ENCODE measurements at regions of chr4 and their contacts with region 1.

Region 1: DNA sequence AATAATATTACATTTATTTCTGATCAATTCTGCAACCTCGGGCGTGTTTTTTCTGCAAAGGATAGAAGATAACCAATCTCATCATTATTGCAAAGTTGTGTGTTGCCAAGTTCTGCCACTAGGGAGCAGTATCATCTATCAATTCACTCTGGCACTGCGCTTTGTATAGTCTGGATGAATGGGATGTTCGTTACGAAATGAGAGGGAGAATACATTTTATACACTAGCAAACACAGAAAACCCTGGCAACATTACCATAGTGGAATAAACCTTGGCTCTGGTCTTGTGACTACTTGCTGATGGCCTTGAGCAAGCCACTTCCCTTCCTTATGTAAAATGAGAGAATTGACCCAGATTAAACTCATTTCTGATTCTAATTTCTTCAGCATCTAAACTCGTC is 97.5 kb upstream of the ZNF518B start:
- DNase-seq: peak; percentile 46
- H3K4me3 ChIP-seq: no peak overlapping the region
- H3K27ac ChIP-seq: no peak overlapping the region
- H3K4me1 ChIP-seq: peaks cover 0 to 5% (median 0%) of the 10 kb centered on the region in 4 donors
- H3K27me3 ChIP-seq: peaks cover 12% of the 10 kb centered on the region
- CTCF ChIP-seq: peak; percentile 69 to 76 (median 73)
- EP300 ChIP-seq: no peak
- POLR2A ChIP-seq: no peak

Region 2: GRCh38 chr4:10157478-10158332 is 397.0 kb before region 1 on chr4:
- in situ Hi-C with region 1: loop called (anchors 10 kb)
- intact Hi-C with region 1: loop called (anchors 10 kb)
- DNase-seq: peak; percentile 54
- H3K4me3 ChIP-seq: no peak overlapping the region
- H3K27ac ChIP-seq: peak overlapping the region in 3 of 4 donors; percentile 24 to 53 (median 48)
- H3K4me1 ChIP-seq: peaks cover 0 to 19% (median 8%) of the 10 kb centered on the region in 4 donors
- H3K27me3 ChIP-seq: no peaks in the 10 kb centered on the region
- CTCF ChIP-seq: peak; percentile 71 to 85 (median 82)
- EP300 ChIP-seq: no peak
- POLR2A ChIP-seq: no peak

Region 3: GRCh38 chr4:10164877-10165283 is 389.8 kb before region 1 on chr4:
- in situ Hi-C with region 1: loop called in 3 of 4 experiments (anchors 10 kb)
- intact Hi-C with region 1: loop called (anchors 10 kb)
- DNase-seq: peak; percentile 55
- H3K4me3 ChIP-seq: no peak overlapping the region
- H3K27ac ChIP-seq: no peak overlapping the region
- H3K4me1 ChIP-seq: peaks cover 0 to 20% (median 7%) of the 10 kb centered on the region in 4 donors
- H3K27me3 ChIP-seq: no peaks in the 10 kb centered on the region
- CTCF ChIP-seq: peak; percentile 57 to 69 (median 64)
- EP300 ChIP-seq: no peak
- POLR2A ChIP-seq: no peak

Region 4: DNA sequence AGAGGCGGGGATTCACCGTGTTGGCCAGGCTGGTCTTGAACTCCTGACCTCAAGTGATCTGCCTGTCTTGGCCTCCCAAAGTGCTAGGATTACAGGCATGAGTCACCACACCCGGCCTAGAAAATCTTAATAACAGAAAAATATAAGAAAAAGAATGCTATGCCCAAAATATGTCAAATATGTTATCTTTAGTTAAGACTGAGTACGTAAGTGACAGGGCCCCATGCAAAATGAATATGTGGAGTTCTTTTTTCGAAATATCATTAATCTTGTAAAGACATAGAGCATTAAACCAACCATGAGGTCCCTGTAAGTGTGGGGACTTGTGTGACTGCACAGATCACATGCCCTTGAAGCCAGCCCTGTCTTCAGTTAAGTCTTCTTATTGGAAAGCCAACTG is 88.5 kb before region 1 on chr4:
- in situ Hi-C with region 1: no loop called
- intact Hi-C with region 1: loop called (anchors 5 kb)
- DNase-seq: no peak
- H3K4me3 ChIP-seq: no peak overlapping the region
- H3K27ac ChIP-seq: no peak overlapping the region
- H3K4me1 ChIP-seq: peaks cover 0 to 7% (median 3%) of the 10 kb centered on the region in 4 donors
- H3K27me3 ChIP-seq: peaks cover 33% of the 10 kb centered on the region
- CTCF ChIP-seq: no peak
- EP300 ChIP-seq: no peak
- POLR2A ChIP-seq: no peak

Region 5: GRCh38 chr4:11424000-11424399 is 869.3 kb after region 1 on chr4:
- in situ Hi-C with region 1: loop called in 1 of 4 experiments (anchors 25 kb)
- intact Hi-C with region 1: no loop called
- DNase-seq: no peak
- H3K4me3 ChIP-seq: no peak overlapping the region
- H3K27ac ChIP-seq: no peak overlapping the region
- H3K4me1 ChIP-seq: peaks cover 0 to 20% (median 7%) of the 10 kb centered on the region in 4 donors
- H3K27me3 ChIP-seq: peaks cover 11% of the 10 kb centered on the region
- CTCF ChIP-seq: peak in 2 of 5 experiments; percentile 19 to 30
- EP300 ChIP-seq: no peak
- POLR2A ChIP-seq: no peak

Region 6: DNA sequence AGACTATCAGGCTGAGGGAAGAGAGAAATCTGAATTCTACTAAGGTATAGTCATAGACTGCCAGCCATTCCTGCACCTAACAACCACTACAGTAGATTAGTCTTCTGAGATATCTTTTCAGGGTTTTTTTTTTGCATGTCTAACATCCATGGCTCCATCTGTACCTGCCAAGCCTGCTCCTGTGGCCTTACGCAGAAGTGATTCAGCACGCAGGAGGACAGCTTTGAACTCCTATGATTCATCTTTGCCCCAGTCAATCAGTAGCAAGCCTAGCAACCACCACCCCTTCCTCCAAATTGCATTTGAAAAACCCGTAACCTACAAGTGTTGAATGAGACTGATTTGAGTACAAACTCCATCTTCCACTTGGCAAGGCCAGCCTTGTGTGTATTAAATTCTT is 1394.7 kb after region 1 on chr4:
- in situ Hi-C with region 1: loop called in 1 of 4 experiments (anchors 25 kb)
- intact Hi-C with region 1: no loop called
- DNase-seq: no peak
- H3K4me3 ChIP-seq: no peak overlapping the region
- H3K27ac ChIP-seq: no peak overlapping the region
- H3K4me1 ChIP-seq: no peaks in the 10 kb centered on the region
- H3K27me3 ChIP-seq: no peaks in the 10 kb centered on the region
- CTCF ChIP-seq: no peak
- EP300 ChIP-seq: no peak
- POLR2A ChIP-seq: no peak